K562 (cell line): ENCODE measurements at regions of chrX and their contacts with region 1.

Region 1: GRCh38 chrX:129843459-129844306 is at the start of gene ZDHHC9:
- DNase-seq: peak; percentile 90 to 94 (median 92)
- ATAC-seq: peak; percentile 99
- H3K4me3 ChIP-seq: peak within 1 kb of the TSS; percentile 65
- H3K27ac ChIP-seq: peak within 1 kb of the TSS; percentile 68
- H3K4me1 ChIP-seq: peaks cover 8 to 16% of the 10 kb centered on the region in 2 experiments; a peak in 4 of 5 replicates
- H3K27me3 ChIP-seq: peaks cover 3 to 12% of the 10 kb centered on the region in 2 experiments; a peak in 3 of 5 replicates
- CTCF ChIP-seq: no peak
- EP300 ChIP-seq: no peak
- POLR2A ChIP-seq: peak; percentile 70
- RAD21 ChIP-seq: no peak
- polyA plus RNA-seq, gene ZDHHC9: 7.2 to 7.3 TPM

Region 2: DNA sequence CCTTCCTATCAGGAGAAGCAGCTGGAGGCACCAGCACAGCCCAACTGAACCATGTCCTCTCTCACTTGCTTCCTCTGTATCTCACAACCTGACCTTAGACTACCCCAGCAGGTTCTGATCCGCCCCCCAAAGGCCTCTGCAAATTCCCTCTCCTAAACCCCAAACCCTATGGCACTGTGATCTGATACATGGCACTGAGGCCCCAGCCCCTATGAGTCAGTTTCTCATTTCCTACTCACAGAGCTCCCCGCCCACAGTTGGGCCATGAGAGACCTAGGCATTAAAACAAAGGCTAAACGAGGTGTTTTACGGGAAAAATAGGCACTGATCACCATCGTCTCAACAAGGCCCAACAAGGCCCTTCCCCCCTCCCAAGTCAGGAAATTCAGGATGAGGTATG is 44.8 kb before region 1 on chrX:
- CTCF ChIA-PET with region 1: no interaction called
- POLR2A ChIA-PET with region 1: no interaction called
- in situ Hi-C with region 1: no loop called
- intact Hi-C with region 1: no loop called
- DNase-seq: no peak
- ATAC-seq: no peak
- H3K4me3 ChIP-seq: no peak overlapping the region
- H3K27ac ChIP-seq: no peak overlapping the region
- H3K4me1 ChIP-seq: peaks cover 0 to under 1% of the 10 kb centered on the region in 2 experiments; a peak in 1 of 5 replicates
- H3K27me3 ChIP-seq: no peaks in the 10 kb centered on the region
- CTCF ChIP-seq: no peak
- EP300 ChIP-seq: no peak
- POLR2A ChIP-seq: no peak
- RAD21 ChIP-seq: no peak

Region 3: GRCh38 chrX:129905787-129906580 is 62.3 kb after region 1 on chrX and contains the start of gene UTP14A:
- CTCF ChIA-PET with region 1: no interaction called
- POLR2A ChIA-PET with region 1: interaction called, 3 read pairs
- in situ Hi-C with region 1: no loop called
- intact Hi-C with region 1: loop called (anchors 5 kb)
- DNase-seq: peak; percentile 86 to 96 (median 89)
- ATAC-seq: peak; percentile 99
- H3K4me3 ChIP-seq: peak within 1 kb of the TSS; percentile 94
- H3K27ac ChIP-seq: peak within 1 kb of the TSS; percentile 89
- H3K4me1 ChIP-seq: peaks cover 0 to 6% of the 10 kb centered on the region in 2 experiments; a peak in 3 of 5 replicates
- H3K27me3 ChIP-seq: no peaks in the 10 kb centered on the region
- CTCF ChIP-seq: no peak
- EP300 ChIP-seq: 0 out of 2 replicates have a peak, but pooled peaks have one; percentile 13
- POLR2A ChIP-seq: peak; percentile 92
- RAD21 ChIP-seq: no peak
- polyA plus RNA-seq, gene UTP14A: 30.5 to 59.9 TPM